ENCODE measurements at regions of chr1 and their contacts with region 1.

Region 1: GRCh38 chr1:117367047-117368018 is at the start of gene MAN1A2:
- DNase-seq: peak; percentile 62 to 93 (median 85)

Region 2: GRCh38 chr1:117121776-117122697 is 245.3 kb before region 1 on chr1:
- intact Hi-C with region 1: loop called (anchors 10 kb)
- DNase-seq: peak; percentile 95 to 99 (median 97)

Region 3: GRCh38 chr1:117436513-117436912 is 69.2 kb after region 1 on chr1:
- intact Hi-C with region 1: no loop called
- DNase-seq: peak in 14 of 42 donors; percentile 4 to 62 (median 19)

Region 4: DNA sequence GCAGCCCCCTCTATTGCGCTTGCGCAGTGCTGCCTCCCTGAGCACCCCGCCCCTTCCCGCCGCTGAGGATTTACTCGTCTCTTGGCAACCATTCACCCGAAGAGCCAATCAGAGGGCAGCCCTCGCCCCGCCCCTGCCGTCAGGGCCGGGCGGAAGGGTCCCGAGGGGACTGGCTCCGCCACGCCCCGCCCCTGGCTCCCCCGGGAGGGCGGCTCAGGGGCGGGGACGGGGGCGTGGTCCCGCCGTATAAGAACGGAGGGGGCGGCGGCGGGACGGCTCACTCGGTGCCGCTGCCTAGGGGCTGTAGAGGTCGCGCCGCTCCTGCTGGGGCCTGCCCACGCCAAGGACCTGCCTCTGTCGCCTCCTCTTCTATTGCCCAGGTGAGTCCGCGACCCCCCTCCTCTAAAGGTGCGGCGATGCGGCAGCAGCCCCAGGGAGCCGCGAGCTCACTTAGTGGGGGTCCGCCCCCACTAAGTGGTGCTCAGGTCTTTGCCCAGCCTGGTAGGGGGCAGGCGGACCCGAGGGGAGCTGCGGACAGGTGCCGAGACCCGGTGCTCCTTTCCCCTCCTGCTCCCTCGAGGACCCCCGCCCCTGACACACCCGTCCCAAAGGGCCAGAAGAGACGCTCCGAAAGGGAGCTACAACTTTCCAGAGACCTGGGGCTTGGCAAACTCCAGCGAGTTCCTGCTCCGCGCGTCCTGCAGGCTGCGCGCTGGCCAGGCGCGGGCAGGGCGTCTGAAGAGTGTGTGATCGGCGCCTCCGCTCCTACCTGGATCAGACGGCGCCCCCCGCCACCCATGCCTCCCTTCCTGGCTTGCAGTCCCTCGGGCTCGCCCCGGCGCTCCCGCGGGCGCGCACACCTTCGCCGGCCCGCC is 238.7 kb after region 1 on chr1 and contains the start of gene TENT5C:
- intact Hi-C with region 1: loop called (anchors 10 kb)
- DNase-seq: peak; percentile 90 to 98 (median 97)

Region 5: DNA sequence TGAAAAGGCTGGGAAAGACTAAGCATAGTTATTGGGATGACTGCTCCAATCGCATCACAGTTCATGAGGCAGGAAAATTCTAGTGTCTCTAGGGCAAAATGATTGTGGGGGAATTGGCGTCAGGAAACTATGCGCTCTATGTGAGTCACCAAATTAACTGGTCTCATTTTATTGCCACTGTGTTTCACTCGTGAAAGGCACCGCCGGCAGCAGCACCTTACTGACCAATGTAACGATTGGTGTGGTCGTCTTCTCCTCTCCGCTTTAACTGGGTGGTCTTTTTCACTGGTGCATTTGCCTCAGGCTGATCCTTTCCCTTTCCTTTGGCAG is 734.1 kb after region 1 on chr1:
- intact Hi-C with region 1: no loop called
- DNase-seq: peak in 3 of 42 donors; percentile 8 to 39 (median 19)